ENCODE measurements at regions of chr16 and their contacts with region 1.

Region 1: DNA sequence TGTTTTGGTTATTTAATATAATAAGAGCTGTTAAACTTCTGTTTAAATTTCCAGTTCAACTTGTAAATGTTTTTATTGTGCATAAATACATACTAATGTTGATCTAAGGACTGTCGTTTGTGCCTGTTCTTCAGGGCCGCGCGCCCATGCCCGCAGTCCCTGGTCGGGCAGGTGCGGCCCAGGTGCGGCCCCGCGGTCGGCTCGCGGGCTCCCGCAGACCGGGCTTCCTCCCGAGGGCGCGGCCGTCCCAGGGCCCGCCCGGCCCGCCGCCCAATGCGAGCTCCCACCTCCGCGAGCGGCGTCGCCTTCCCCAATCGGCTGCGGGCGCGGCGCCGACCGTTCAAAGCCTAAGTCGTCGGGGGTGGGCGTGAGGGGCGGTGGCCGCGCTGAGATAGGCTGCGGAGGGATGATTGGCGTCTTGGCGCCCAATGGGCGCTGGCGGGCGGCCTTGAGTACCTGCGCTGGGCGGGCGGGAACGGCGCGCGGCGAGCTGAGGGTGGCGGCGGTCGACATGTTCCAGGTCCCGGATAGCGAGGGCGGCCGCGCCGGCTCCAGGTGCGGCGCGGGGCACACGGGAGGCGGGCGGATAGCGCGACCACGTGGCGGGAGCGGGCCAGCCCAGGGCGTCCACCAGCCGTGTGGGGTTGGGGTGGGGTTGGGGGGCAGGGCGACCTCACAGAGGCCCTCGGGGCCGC is at the start of gene JPT2:
- DNase-seq: peak; percentile 90 to 99
- H3K4me3 ChIP-seq: peak within 1 kb of the TSS; percentile 98
- H3K27ac ChIP-seq: peak within 1 kb of the TSS; percentile 82
- H3K4me1 ChIP-seq: peaks cover 27% of the 10 kb centered on the region
- H3K27me3 ChIP-seq: no peaks in the 10 kb centered on the region
- CTCF ChIP-seq: no peak
- total RNA-seq, gene JPT2: 199 and 244 TPM in 2 replicates

Region 2: DNA sequence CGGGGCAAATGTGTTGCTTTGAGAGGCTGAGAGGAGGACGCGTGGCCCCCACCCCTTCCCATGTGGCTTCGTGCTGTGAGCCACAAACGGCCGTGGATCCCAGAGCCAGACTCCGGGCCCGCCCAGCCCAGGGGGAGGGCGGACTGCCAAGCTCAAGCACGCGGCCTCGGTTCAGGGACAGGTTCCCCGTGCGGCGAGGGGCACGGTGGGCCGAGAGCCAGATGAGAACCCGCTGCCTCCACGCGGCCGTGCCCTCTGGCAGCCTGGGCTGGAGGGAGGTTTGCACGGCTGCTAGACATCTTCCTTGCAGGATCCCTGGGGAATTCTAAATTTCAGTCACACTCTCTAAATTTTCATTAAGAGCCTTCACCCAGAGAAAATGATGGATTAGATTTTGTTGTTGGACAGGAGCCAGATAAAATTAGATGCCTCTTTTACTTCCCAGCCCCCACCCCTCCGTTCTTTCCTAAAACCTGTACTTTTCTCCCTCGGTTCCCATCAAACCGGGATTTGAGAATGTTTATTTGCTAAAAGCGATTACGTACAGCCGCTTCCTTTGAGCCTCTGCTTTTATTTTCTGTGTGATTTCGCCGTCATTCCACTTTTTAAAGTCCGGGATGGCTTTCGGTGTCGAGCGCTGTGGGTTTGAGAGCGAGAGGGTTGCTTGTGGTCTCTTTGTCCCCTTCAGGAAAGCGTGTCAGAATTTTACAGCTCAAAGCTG is 852.4 kb before region 1 on chr16:
- CTCF ChIA-PET with region 1: no interaction called
- POLR2A ChIA-PET with region 1: no interaction called
- intact Hi-C with region 1: no loop called
- DNase-seq: no peak
- H3K4me3 ChIP-seq: no peak overlapping the region
- H3K27ac ChIP-seq: no peak overlapping the region
- H3K4me1 ChIP-seq: no peaks in the 10 kb centered on the region
- H3K27me3 ChIP-seq: peaks cover 93% of the 10 kb centered on the region
- CTCF ChIP-seq: no peak

Region 3: GRCh38 chr16:1691276-1691675 is 13.3 kb after region 1 on chr16:
- CTCF ChIA-PET with region 1: no interaction called
- POLR2A ChIA-PET with region 1: interaction called, 10 read pairs
- intact Hi-C with region 1: loop called (anchors 1 kb)
- DNase-seq: peak in 1 of 2 experiments; percentile 46
- H3K4me3 ChIP-seq: no peak overlapping the region
- H3K27ac ChIP-seq: peak overlapping the region; percentile 99
- H3K4me1 ChIP-seq: peaks cover 64% of the 10 kb centered on the region
- H3K27me3 ChIP-seq: no peaks in the 10 kb centered on the region
- CTCF ChIP-seq: no peak; the same call in 1 of the 2 replicates

Region 4: DNA sequence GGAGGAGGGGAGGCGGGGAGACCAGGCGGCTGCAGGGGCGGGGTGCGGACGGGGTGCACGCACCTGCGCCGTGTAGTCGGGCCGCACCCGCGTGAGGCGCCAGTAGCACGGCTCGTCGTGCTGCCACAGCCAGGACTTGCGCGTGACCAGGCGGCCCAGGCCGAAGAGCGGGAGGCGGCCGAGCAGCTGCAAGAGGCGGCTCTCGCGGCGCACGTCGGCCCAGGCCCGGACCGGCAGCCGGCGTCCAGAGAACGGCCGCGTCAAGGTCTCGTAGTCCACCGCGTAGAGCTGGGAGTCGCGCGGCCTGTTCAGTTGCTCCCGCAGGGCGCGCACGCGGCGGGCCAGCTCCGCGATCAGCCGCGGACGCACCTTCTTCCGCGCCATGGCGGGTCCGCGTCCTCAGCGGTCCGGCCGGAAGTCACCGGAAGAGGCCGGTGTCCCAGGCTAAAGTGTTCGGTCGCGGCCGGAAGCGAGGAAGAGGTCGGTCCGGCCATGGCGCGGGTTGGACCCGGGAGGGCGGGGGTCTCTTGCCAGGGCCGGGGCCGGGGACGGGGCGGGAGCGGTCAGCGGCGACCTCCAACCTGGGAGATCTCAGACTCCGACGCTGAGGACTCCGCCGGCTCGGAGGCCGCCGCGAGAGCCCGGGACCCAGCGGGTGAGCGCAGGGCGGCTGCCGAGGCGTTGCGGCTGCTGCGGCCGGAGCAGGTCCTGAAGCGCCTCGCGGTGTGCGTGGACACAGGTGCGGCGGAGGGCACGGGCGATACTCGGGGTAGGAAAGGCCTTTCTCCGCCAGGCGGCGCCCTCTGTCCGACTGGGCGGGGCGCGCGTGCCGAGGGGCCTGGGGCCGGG is 95.0 kb after region 1 on chr16 and contains the starts of genes EME2 and MRPS34:
- CTCF ChIA-PET with region 1: no interaction called
- POLR2A ChIA-PET with region 1: no interaction called
- intact Hi-C with region 1: loop called (anchors 5 kb)
- DNase-seq: peak; percentile 69 to 93
- H3K4me3 ChIP-seq: peak within 1 kb of the TSS; percentile 77
- H3K27ac ChIP-seq: peak within 1 kb of the TSS; percentile 77
- H3K4me1 ChIP-seq: peaks cover 19% of the 10 kb centered on the region
- H3K27me3 ChIP-seq: no peaks in the 10 kb centered on the region
- CTCF ChIP-seq: peak; percentile 90
- total RNA-seq, gene EME2: 24.2 and 32.4 TPM in 2 replicates
- total RNA-seq, gene MRPS34: 201 and 247 TPM in 2 replicates

Region 5: DNA sequence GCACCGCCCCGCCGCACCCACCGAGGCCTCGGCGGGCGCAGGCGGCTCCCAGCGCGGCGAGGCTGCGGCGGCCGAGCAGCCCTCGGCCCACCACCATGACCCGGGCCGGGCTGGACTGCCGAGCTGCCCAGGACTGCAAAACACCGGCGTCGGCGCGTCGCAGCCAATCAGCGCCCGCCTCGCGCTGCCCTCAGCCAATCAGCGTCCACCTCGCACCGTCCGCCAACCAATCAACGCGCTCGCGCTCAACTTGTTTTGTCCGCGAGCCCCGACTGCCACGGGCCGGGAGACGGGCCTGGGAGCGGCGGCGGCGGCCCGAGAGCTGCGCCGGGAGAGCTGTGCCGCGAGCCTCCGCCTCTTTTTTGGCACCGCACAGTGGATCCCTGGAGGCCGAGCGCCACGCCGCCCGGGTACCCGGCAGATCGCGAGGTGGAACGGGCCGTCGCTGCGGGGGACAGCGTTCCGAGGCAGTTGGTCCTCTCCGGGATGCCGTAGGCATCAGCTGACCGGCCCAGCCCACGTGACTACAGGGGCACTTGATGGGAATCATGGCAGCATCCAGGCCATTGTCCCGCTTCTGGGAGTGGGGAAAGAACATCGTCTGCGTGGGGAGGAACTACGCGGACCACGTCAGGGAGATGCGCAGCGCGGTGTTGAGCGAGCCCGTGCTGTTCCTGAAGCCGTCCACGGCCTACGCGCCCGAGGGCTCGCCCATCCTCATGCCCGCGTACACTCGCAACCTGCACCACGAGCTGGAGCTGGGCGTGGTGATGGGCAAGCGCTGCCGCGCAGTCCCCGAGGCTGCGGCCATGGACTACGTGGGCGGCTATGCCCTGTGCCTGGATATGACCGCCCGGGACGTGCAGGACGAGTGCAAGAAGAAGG is 149.0 kb after region 1 on chr16 and contains the starts of genes FAHD1 and HAGH:
- CTCF ChIA-PET with region 1: no interaction called
- POLR2A ChIA-PET with region 1: no interaction called
- intact Hi-C with region 1: no loop called
- DNase-seq: peak; percentile 80 to 96
- H3K4me3 ChIP-seq: peak within 1 kb of the TSS; percentile 74
- H3K27ac ChIP-seq: 0 out of 2 replicates have a peak within 1 kb of the TSS, but pooled peaks have one; percentile 5
- H3K4me1 ChIP-seq: peaks cover 28% of the 10 kb centered on the region
- H3K27me3 ChIP-seq: no peaks in the 10 kb centered on the region
- CTCF ChIP-seq: no peak
- total RNA-seq, gene FAHD1: 26.8 and 41.2 TPM in 2 replicates
- total RNA-seq, gene HAGH: 51.8 and 74.5 TPM in 2 replicates